Breast epithelium (tissue), 4 donors: ENCODE measurements at regions of chr14 and their contacts with region 1.

Region 1: DNA sequence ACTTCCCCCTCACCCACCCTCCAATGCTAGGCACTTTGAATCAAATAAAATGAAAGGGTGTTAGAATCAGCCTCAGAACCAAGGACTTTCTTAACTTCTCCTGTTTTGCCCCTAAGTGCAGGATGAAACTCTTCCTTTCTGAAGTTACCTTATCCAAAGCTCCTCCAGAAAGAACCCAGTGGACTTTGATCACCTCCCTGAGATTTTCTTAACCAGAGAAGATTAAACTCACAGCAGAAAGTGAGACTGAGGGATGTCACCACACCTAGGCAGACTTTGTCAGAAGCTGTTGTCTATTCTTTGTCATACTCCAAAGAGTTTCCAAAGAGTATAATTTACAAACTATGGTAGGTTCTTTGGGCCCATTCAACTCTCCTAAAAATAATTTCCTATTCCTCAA is 14.2 kb upstream of the RNASE3 start:
- DNase-seq: no peak
- H3K4me3 ChIP-seq: no peak overlapping the region
- H3K27ac ChIP-seq: no peak overlapping the region
- H3K4me1 ChIP-seq: no peaks in the 10 kb centered on the region
- H3K27me3 ChIP-seq: no peaks in the 10 kb centered on the region
- CTCF ChIP-seq: no peak
- POLR2A ChIP-seq: no peak

Region 2: GRCh38 chr14:21317398-21317797 is 440.4 kb after region 1 on chr14:
- intact Hi-C with region 1: no loop called
- DNase-seq: no peak
- H3K4me3 ChIP-seq: no peak overlapping the region
- H3K27ac ChIP-seq: no peak overlapping the region
- H3K4me1 ChIP-seq: no peaks in the 10 kb centered on the region
- H3K27me3 ChIP-seq: no peaks in the 10 kb centered on the region
- CTCF ChIP-seq: no peak
- POLR2A ChIP-seq: no peak

Region 3: DNA sequence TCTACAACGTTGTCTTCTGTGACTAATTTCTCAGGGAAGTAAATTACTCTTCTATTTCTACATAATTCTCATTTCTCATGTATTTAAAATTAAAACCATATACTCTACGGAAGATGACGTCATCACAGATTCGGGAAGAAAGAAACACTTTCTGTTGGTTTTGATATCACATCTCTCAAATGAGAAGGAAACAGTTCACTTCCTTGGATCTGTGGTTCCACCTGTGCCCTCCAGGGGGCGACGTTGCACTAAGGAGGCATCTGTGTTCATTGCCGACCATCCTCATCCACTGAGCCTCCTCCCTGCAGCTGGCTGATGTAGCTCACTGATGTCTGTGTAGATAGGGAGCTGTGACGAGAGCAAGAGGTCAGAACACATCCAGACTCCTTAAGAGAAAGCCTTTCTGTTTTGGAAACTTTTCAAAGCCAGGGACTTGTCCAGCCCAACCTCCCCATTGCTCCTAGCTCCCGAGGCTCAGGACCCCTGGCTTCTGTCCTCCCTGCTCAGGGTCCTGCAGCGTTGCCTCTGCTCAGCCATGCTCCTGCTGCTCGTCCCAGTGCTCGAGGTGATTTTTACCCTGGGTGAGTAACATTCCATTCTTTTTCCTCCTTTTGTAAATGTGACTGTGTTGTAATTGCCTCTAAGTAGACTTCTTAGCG is 969.3 kb after region 1 on chr14:
- intact Hi-C with region 1: loop called (anchors 10 kb)
- DNase-seq: no peak
- H3K4me3 ChIP-seq: no peak overlapping the region
- H3K27ac ChIP-seq: no peak overlapping the region
- H3K4me1 ChIP-seq: no peaks in the 10 kb centered on the region
- H3K27me3 ChIP-seq: no peaks in the 10 kb centered on the region
- CTCF ChIP-seq: no peak
- POLR2A ChIP-seq: no peak